Mammary epithelial cell (primary cell): ENCODE measurements at regions of chrX and their contacts with region 1.

Region 1: GRCh38 chrX:135484641-135485289 is 35.7 kb upstream of the INTS6L start:
- DNase-seq: peak; percentile 19
- H3K4me3 ChIP-seq: no peak overlapping the region
- H3K27ac ChIP-seq: no peak overlapping the region
- H3K4me1 ChIP-seq: no peaks in the 10 kb centered on the region
- H3K27me3 ChIP-seq: no peaks in the 10 kb centered on the region
- CTCF ChIP-seq: peak; percentile 57 to 72

Region 2: DNA sequence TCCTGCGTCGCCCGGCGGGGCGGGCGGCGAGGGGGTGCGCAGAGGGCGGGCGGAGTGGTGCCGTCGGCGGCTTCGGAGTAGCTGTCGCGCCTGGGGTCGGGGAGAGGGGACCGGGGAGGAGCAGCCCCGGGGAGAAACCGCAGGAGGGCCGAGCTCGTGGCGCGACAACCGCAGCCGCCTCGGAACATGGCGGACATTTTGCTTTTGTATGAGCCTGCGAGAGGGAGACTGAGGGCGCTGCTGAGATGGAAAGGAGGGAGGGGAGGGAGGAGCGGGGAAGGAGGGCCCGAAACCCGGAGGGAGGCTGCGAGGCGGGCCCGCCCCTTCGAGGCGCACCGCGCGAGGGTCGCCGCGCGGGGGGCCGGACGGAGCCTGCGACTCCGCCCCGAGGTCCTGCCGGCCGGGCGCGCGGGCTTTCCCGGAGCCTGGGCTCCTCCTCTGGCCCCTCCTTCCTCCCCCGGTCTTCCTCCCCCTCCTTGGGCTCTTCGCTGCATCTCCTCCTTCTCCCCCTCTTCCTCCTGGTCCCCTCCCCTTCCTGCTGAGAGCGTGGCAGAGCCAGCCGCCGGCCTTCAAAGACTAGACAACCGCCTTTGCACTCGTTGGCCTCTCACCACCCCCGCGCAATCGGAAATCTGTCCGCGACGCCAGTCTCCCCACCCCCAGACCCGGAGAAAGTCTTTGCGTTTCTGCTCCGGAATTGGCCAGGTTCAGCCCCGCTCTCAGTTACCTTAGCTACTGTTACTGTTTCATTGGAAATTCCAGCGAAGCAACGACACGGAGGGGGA is 36.8 kb after region 1 on chrX:
- CTCF ChIA-PET with region 1: no interaction called
- dilution Hi-C with region 1: no loop called
- in situ Hi-C with region 1: no loop called
- intact Hi-C with region 1: loop called (anchors 1 kb)
- DNase-seq: peak; percentile 83
- H3K4me3 ChIP-seq: peak overlapping the region; percentile 52 to 64 (median 58)
- H3K27ac ChIP-seq: peak overlapping the region; percentile 98
- H3K4me1 ChIP-seq: no peaks in the 10 kb centered on the region
- H3K27me3 ChIP-seq: no peaks in the 10 kb centered on the region
- CTCF ChIP-seq: no peak

Region 3: GRCh38 chrX:135572436-135572835 is 87.7 kb after region 1 on chrX:
- CTCF ChIA-PET with region 1: no interaction called
- dilution Hi-C with region 1: no loop called
- in situ Hi-C with region 1: loop called (anchors 10 kb)
- intact Hi-C with region 1: loop called (anchors 1 kb)
- DNase-seq: no peak
- H3K4me3 ChIP-seq: no peak overlapping the region
- H3K27ac ChIP-seq: no peak overlapping the region
- H3K4me1 ChIP-seq: no peaks in the 10 kb centered on the region
- H3K27me3 ChIP-seq: no peaks in the 10 kb centered on the region
- CTCF ChIP-seq: peak; percentile 47

Region 4: GRCh38 chrX:135596495-135596894 is 111.7 kb after region 1 on chrX:
- CTCF ChIA-PET with region 1: no interaction called
- dilution Hi-C with region 1: no loop called
- in situ Hi-C with region 1: no loop called
- intact Hi-C with region 1: loop called (anchors 1 kb)
- DNase-seq: peak; percentile 25
- H3K4me3 ChIP-seq: no peak overlapping the region
- H3K27ac ChIP-seq: no peak overlapping the region
- H3K4me1 ChIP-seq: no peaks in the 10 kb centered on the region
- H3K27me3 ChIP-seq: no peaks in the 10 kb centered on the region
- CTCF ChIP-seq: peak; percentile 54 to 67